Naive thymus-derived CD8-positive, alpha-beta T cell (primary cell): ENCODE measurements at regions of chr1 and their contacts with region 1.

Region 1: DNA sequence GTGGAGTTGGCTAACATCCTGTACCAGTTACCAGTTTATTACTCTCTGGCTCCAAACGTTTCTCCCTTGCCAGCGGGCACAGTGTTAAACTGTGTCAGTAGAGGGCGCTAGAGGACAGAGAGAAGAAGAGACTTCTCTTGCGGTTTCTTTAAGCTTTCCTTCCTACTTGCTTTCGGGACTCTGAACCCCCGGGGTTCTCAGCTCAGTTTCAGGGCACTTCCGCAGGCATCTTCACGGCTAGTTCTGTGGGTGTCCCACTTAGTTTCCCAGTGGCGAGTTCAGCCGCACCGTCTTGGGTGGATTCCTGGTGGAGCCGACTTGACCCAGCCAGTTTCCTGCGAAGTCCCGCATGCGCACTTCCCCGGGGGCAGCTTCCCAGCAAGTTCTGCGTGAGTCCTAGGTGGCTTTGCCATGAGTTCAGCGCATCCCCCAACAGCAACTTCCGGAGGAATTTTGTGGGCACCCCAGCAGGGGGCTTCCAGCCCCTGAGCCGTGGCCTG is 37.9 kb upstream of the BTG2 start:
- DNase-seq: peak; percentile 52 to 93 (median 82)
- ATAC-seq: peak; percentile 58 to 69
- H3K4me3 Mint-ChIP-seq: peak overlapping the region; percentile 82 to 94 (median 90)
- H3K27ac Mint-ChIP-seq: peak overlapping the region; percentile 78 to 95 (median 93)
- H3K4me1 Mint-ChIP-seq: peaks cover 12 to 35% (median 23%) of the 10 kb centered on the region in 4 donors
- H3K27me3 Mint-ChIP-seq: no peaks in the 10 kb centered on the region

Region 2: GRCh38 chr1:203488539-203488938 is 221.1 kb after region 1 on chr1:
- POLR2A ChIA-PET with region 1: interaction called, 14 read pairs
- DNase-seq: no peak
- ATAC-seq: no peak
- H3K4me3 Mint-ChIP-seq: peak overlapping the region in 6 of 10 donors; percentile 7 to 41 (median 20)
- H3K27ac Mint-ChIP-seq: peak overlapping the region in 1 of 10 donors; percentile 22
- H3K4me1 Mint-ChIP-seq: peaks cover 2 to 20% (median 11%) of the 10 kb centered on the region in 4 donors
- H3K27me3 Mint-ChIP-seq: peaks cover 0 to 3% (median 0%) of the 10 kb centered on the region in 5 donors